ENCODE measurements at regions of chr1 and their contacts with region 1.

Region 1: GRCh38 chr1:76330991-76331603 is 256.6 kb downstream of the ST6GALNAC3 start:
- DNase-seq: peak in 1 of 2 donors; percentile 14
- ATAC-seq: peak in 1 of 8 donors; percentile 60
- H3K4me3 ChIP-seq: no peak overlapping the region
- H3K27ac ChIP-seq: no peak overlapping the region
- H3K4me1 ChIP-seq: peaks cover 0 to 6% (median 0%) of the 10 kb centered on the region in 9 donors
- H3K27me3 ChIP-seq: no peaks in the 10 kb centered on the region
- CTCF ChIP-seq: peak; percentile 72 to 92 (median 86)

Region 2: DNA sequence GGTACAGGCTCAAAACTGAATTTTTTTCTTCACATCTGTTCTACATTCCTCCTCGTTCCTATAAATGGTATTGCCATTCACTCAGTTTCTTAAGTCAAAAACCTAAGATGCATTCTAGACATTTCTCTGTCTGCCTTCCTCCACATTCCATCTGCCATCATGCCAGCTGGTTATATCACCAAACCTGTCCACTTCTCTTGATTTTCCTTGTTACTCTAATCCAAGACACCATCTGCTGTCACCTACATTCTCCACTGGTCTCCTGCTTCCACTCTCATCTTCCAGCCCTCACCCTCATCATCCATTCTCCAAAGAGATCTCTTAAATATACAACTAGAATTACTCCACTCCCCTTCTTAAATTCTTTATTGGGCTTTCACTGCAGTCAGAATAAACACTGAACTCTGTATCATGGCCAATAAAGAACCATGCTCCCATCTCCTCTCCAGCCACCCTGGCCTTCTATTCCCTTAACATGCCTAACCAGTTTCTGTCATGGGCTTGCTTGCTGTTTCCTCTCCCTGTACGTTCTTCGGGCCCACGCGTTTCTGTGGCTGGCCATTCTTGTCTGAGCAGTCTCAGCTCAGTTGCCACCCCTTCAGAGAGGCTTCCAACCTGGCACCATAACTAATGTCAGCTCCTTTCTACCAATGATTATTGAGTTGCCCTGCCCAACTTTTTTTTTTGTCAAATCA is 21.8 kb after region 1 on chr1:
- intact Hi-C with region 1: loop called in 1 of 10 experiments (anchors 1 kb)
- DNase-seq: no peak
- ATAC-seq: no peak
- H3K4me3 ChIP-seq: no peak overlapping the region
- H3K27ac ChIP-seq: no peak overlapping the region
- H3K4me1 ChIP-seq: no peaks in the 10 kb centered on the region
- H3K27me3 ChIP-seq: no peaks in the 10 kb centered on the region
- CTCF ChIP-seq: no peak

Region 3: GRCh38 chr1:76830373-76830772 is 499.3 kb after region 1 on chr1:
- intact Hi-C with region 1: no loop called
- DNase-seq: no peak
- ATAC-seq: no peak
- H3K4me3 ChIP-seq: no peak overlapping the region
- H3K27ac ChIP-seq: no peak overlapping the region
- H3K4me1 ChIP-seq: no peaks in the 10 kb centered on the region
- H3K27me3 ChIP-seq: peaks cover 0 to 5% (median 0%) of the 10 kb centered on the region in 7 donors
- CTCF ChIP-seq: no peak

Region 4: DNA sequence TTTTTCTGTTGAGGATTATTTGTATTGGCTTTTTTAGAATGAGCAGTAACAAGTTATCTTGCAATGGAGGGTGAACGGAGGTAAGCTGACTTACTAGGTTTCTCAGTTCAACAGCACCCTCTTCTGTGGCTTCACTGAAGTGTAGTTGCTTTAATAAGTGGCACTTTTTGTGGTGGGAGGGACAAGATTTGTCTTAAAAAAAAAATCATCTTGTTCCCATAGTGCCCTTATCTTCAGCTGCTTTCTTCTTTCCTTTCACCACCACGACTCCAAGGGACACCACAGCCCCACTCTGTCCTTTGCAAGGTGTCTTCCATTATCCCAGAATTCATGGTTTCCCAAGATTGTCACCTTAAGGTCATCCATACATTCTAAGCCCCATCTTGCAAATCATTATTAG is 795.2 kb after region 1 on chr1:
- intact Hi-C with region 1: loop called in 7 of 10 experiments (anchors 5 to 10 kb)
- DNase-seq: peak in 1 of 2 donors; percentile 17
- ATAC-seq: peak in 2 of 8 donors; percentile 50 to 63
- H3K4me3 ChIP-seq: no peak overlapping the region
- H3K27ac ChIP-seq: no peak overlapping the region
- H3K4me1 ChIP-seq: no peaks in the 10 kb centered on the region
- H3K27me3 ChIP-seq: no peaks in the 10 kb centered on the region
- CTCF ChIP-seq: peak in 7 of 9 donors; percentile 42 to 58 (median 52)

Region 5: DNA sequence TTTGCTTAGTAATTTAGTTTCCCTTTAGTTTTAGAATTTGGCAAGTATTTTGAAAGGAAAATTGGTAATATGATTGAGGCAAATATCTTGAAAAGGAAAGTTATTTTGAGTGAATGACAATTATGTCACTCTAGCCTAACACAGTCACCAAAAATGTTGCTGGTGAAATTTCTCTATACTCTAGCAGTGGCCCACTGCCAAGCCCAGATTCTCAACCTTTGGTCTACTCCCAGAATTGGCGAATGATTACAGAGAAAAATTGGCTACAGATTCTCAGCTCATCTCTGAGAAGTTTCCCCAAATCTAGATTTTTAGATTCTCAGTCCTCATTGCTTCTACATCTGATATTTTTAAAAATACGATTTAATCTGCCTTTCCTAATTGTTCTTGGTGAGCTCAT is 803.3 kb after region 1 on chr1:
- intact Hi-C with region 1: loop called in 7 of 10 experiments (anchors 5 to 10 kb)
- DNase-seq: no peak
- ATAC-seq: no peak
- H3K4me3 ChIP-seq: no peak overlapping the region
- H3K27ac ChIP-seq: no peak overlapping the region
- H3K4me1 ChIP-seq: peaks cover 0 to 11% (median 0%) of the 10 kb centered on the region in 9 donors
- H3K27me3 ChIP-seq: no peaks in the 10 kb centered on the region
- CTCF ChIP-seq: no peak